Psoas muscle (tissue), 8 donors: ENCODE measurements at regions of chr21 and their contacts with region 1.

Region 1: GRCh38 chr21:36429947-36430546 is 44.9 kb downstream of the CHAF1B start:
- DNase-seq: peak; percentile 90 to 95
- ATAC-seq: peak; percentile 94 to 98 (median 96)
- H3K4me3 ChIP-seq: peak overlapping the region; percentile 63
- H3K27ac ChIP-seq: peak overlapping the region; percentile 94
- H3K4me1 ChIP-seq: peaks cover 20% of the 10 kb centered on the region
- H3K27me3 ChIP-seq: no peaks in the 10 kb centered on the region
- CTCF ChIP-seq: peak; percentile 11

Region 2: GRCh38 chr21:36606287-36606982 is 176.4 kb after region 1 on chr21:
- intact Hi-C with region 1: no loop called
- DNase-seq: no peak
- ATAC-seq: no peak
- H3K4me3 ChIP-seq: no peak overlapping the region
- H3K27ac ChIP-seq: no peak overlapping the region
- H3K4me1 ChIP-seq: no peaks in the 10 kb centered on the region
- H3K27me3 ChIP-seq: peaks cover 0 to 21% (median 9%) of the 10 kb centered on the region in 3 donors
- CTCF ChIP-seq: no peak

Region 3: GRCh38 chr21:36698981-36699891 is 269.2 kb after region 1 on chr21 and contains the start of gene SIM2:
- intact Hi-C with region 1: loop called in 1 of 2 experiments (anchors 10 kb)
- DNase-seq: no peak
- ATAC-seq: peak; percentile 42 to 75 (median 61)
- H3K4me3 ChIP-seq: peak within 1 kb of the TSS; percentile 72
- H3K27ac ChIP-seq: no peak within 1 kb of the TSS
- H3K4me1 ChIP-seq: peaks cover 47% of the 10 kb centered on the region
- H3K27me3 ChIP-seq: peaks cover 3 to 100% (median 84%) of the 10 kb centered on the region in 3 donors
- CTCF ChIP-seq: no peak
- total RNA-seq, gene SIM2: 0.08 to 3.0 (median 0.77) TPM